Sigmoid colon (tissue), 7 donors: ENCODE measurements at regions of chr9 and their contacts with region 1.

Region 1: GRCh38 chr9:131407717-131408195 is 13.9 kb downstream of the PRRC2B start:
- DNase-seq: peak; percentile 80
- H3K4me3 ChIP-seq: peak overlapping the region in 2 of 4 donors; percentile 16 to 26
- H3K27ac ChIP-seq: peak overlapping the region; percentile 74 to 97 (median 96)
- H3K4me1 ChIP-seq: peaks cover 0 to 99% (median 95%) of the 10 kb centered on the region in 4 donors
- H3K27me3 ChIP-seq: no peaks in the 10 kb centered on the region
- CTCF ChIP-seq: peak; percentile 26 to 51 (median 45)
- EP300 ChIP-seq: no peak
- POLR2A ChIP-seq: no peak

Region 2: GRCh38 chr9:131393622-131394463 is 13.9 kb before region 1 on chr9 and contains the start of gene PRRC2B:
- intact Hi-C with region 1: loop called (anchors 1 kb)
- DNase-seq: peak; percentile 93
- H3K4me3 ChIP-seq: peak within 1 kb of the TSS; percentile 46 to 78 (median 75)
- H3K27ac ChIP-seq: peak within 1 kb of the TSS; percentile 95 to 97 (median 97)
- H3K4me1 ChIP-seq: peaks cover 0 to 49% (median 41%) of the 10 kb centered on the region in 4 donors
- H3K27me3 ChIP-seq: no peaks in the 10 kb centered on the region
- CTCF ChIP-seq: peak in 1 of 4 experiments; percentile 74
- EP300 ChIP-seq: no peak
- POLR2A ChIP-seq: no peak
- total RNA-seq, gene PRRC2B: 62.7 to 98.6 (median 78.9) TPM

Region 3: DNA sequence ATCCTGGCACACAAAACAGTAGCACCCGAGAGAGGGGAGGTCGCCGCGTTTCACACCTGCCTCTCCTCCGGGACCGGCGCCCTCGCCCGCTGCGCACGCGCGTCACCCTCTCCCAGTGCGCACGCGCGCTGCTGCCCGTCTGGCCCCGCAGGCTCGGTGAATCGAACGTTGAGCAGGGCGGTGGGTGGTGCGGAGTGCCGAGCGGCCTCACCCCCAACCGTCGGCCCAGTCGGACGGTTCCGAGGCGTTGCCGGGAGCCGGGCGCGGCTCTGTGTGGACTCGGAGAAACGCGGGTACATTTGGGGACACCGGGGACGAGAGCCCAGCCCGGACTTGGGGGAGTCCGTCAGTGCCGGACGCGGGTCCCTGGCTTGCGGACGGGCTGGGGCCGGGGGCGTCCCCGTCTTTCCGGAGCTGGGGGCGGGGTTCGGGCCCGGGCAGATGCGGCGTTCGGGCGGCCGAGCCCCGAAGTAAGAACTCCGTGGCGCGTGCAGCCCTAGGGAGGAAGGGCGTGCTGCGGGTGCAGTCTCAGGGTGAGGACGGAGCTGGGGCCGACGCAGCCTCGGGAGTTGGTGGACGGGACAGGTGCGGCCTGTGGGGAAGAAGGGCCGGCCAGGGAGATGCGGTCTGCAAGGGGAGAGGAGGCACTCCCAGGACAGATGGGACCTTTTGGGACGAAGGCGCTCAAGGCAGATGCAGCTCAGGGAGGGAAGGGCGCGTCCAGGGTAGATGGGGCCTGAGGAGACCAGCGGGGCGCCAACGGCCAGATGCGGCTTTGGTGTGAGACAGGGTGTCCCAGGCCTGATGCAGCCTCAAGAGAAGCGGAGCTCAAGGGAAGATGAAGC is 95.2 kb after region 1 on chr9 and contains the start of gene POMT1:
- intact Hi-C with region 1: loop called (anchors 5 kb)
- DNase-seq: peak; percentile 93
- H3K4me3 ChIP-seq: peak within 1 kb of the TSS; percentile 69 to 93 (median 85)
- H3K27ac ChIP-seq: peak within 1 kb of the TSS; percentile 80 to 86 (median 84)
- H3K4me1 ChIP-seq: peaks cover 0 to 27% (median 24%) of the 10 kb centered on the region in 4 donors
- H3K27me3 ChIP-seq: no peaks in the 10 kb centered on the region
- CTCF ChIP-seq: no peak
- EP300 ChIP-seq: no peak
- POLR2A ChIP-seq: peak; percentile 26 to 42
- total RNA-seq, gene POMT1: 21.9 to 61.2 (median 30.0) TPM

Region 4: GRCh38 chr9:132018957-132019405 is 611.2 kb after region 1 on chr9:
- intact Hi-C with region 1: no loop called
- DNase-seq: no peak
- H3K4me3 ChIP-seq: no peak overlapping the region
- H3K27ac ChIP-seq: no peak overlapping the region
- H3K4me1 ChIP-seq: peaks cover 0 to 35% (median 8%) of the 10 kb centered on the region in 4 donors
- H3K27me3 ChIP-seq: no peaks in the 10 kb centered on the region
- CTCF ChIP-seq: no peak
- EP300 ChIP-seq: no peak
- POLR2A ChIP-seq: no peak